Common myeloid progenitor, CD34-positive (primary cell): ENCODE measurements at regions of chr15 and their contacts with region 1.

Region 1: DNA sequence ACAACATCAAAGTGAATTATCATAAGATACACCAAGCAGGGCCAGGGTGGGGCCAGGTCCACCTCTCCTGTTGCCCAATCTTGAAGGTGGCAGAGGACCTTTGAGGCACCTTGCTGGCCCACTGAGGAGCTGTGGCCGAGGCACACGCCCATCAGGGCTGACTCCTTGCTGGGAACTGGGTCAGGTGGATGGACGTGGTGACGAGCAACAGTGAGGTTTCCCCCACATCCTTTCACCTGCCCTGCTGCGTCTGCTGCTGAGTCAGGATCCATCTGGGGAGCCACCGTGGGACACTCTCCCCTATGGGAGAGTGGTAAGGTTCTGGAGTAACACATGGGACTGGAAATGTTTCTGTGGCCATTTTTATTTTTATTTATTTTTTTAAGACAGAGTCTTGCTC is 17.3 kb upstream of the FURIN start:
- DNase-seq: no peak
- H3K4me3 ChIP-seq: no peak overlapping the region
- H3K27ac ChIP-seq: no peak overlapping the region
- H3K4me1 ChIP-seq: peaks cover 0 to 21% (median 15%) of the 10 kb centered on the region in 4 experiments
- H3K27me3 ChIP-seq: no peaks in the 10 kb centered on the region

Region 2: DNA sequence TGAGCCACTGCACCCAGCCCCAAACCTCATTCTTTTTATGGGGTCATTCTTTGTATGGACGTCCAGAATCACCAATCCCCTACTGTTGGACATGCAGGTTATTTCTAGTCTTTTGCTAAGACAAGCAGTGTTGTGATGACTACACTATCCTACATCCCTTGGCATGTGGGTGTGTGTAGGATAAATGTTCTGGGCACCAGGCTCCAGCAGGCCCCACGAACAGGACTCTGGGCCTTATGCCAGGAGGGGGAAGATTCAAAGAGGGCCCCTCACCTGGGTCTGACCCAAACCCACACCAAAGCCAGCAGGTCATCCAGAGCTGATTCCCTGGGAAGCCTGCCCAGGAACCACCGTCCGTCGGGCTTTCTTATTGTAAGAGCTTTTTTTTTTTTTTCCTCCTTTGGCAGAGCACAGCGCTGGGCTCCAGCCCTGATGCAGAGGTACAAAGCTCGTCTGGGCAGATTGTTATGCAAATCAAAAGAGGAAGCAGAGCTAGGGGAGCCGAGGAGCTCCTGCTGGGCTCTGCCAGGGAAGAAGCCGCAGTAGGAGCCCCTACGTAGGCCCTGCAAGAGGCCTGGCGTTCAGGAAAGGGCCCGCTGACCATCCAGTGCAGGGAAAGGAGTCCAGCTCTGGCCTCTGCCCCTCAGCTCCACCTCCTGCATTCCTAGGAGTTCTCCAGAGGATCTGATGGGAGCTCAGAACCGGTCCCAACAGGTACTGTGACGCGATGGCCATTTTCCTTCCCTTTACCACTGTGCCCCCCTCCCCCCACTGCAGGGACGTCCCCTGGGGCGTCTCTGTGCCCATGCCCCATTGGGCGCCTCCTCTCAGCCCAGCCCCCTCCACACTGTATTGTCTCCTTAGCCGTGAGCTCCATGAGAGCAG is 11.7 kb before region 1 on chr15:
- CTCF ChIA-PET with region 1: interaction called, 28 read pairs
- POLR2A ChIA-PET with region 1: interaction called, 7 read pairs
- DNase-seq: peak; percentile 65 to 89 (median 86)
- H3K4me3 ChIP-seq: peak overlapping the region in 6 of 7 experiments; percentile 45 to 77 (median 58)
- H3K27ac ChIP-seq: peak overlapping the region; percentile 59 to 76
- H3K4me1 ChIP-seq: peaks cover 4 to 52% (median 46%) of the 10 kb centered on the region in 4 experiments
- H3K27me3 ChIP-seq: no peaks in the 10 kb centered on the region